GM10248 (cell line): ENCODE measurements at regions of chr2 and their contacts with region 1.

Region 1: GRCh38 chr2:189674374-189675112 is at the start of gene ANKAR:
- DNase-seq: peak; percentile 90
- CTCF ChIP-seq: peak; percentile 84

Region 2: DNA sequence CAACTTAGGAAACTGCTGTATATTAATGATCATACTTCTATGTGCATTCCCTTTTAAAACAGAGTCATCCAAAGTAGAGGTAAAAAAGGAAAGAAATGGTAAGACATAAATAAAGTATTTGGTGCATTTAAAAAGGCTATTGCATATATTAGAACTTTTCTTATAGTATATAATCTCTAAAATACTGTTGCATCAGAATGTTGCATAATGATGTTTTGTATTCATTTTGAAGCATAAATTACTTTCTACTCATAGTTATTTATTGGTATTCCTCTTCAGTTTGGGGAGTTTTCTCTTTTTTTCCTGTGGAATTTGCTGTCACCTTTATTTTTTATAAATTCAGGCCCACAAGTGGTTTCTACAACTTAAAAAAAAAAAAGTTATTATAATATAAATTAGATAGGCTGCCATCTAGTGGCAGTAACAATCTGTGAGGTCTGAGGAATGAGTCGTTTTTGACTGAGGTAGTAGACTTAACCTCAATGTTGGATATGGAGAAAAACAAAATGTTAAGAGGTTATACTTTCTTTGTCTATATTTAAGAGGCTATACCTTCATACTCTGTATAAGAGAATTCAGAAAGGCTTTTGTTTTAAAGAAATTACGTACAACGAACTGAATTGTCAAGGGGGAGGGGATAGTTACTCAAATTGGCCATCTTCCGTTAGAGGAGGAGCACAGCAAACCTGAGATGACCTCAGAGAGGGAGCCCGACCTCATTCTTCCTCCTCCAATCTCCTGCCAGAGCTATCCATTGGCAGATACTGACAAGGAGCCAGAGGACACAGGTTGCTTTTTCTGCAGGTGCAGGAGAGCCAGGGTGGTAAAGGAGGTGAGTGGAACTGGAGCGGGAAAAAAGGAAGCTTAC is 23.7 kb after region 1 on chr2:
- CTCF ChIA-PET with region 1: interaction called, 67 read pairs
- POLR2A ChIA-PET with region 1: no interaction called
- DNase-seq: peak; percentile 26
- CTCF ChIP-seq: peak; percentile 48